SK-N-SH (cell line): ENCODE measurements at regions of chr7 and their contacts with region 1.

Region 1: DNA sequence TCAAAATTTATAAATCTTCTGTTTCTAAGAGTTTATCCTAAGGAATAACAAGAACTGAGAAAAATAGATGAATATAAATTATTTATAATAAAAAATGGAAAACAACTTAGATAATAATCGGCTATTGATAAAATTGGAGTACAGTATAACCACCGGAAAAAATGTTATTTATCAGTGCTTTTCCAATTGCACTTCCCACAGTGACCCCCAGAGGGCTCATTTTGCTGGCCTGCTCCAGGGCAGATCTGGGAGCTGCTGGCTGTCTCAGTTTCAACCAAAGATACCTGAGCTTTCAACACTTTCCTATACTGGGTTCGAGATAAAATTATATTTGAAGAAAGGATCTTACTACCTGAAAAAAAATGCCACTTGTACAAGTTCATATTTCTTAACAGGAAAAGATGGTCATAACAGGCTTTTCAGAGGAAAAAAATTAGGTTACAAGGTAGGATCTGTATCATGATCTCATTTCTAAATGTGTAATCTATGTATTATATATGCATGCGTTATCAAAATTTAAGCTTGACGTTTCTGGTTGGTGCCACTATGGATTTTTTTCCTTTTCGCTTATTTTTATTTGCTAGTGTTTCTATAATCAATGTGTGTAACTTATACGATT is 165.7 kb downstream of the NPSR1 start:
- DNase-seq: peak; percentile 66
- H3K4me3 ChIP-seq: no peak overlapping the region
- H3K27ac ChIP-seq: no peak overlapping the region
- H3K4me1 ChIP-seq: no peaks in the 10 kb centered on the region; a peak in 1 of 4 replicates
- H3K27me3 ChIP-seq: no peaks in the 10 kb centered on the region; the same call in 1 of the 2 replicates
- CTCF ChIP-seq: peak; percentile 98
- EP300 ChIP-seq: no peak
- RAD21 ChIP-seq: peak; percentile 79

Region 2: GRCh38 chr7:34806831-34807230 is 16.9 kb before region 1 on chr7:
- CTCF ChIA-PET with region 1: interaction called, 16 read pairs
- POLR2A ChIA-PET with region 1: no interaction called
- DNase-seq: no peak
- H3K4me3 ChIP-seq: no peak overlapping the region
- H3K27ac ChIP-seq: no peak overlapping the region
- H3K4me1 ChIP-seq: no peaks in the 10 kb centered on the region
- H3K27me3 ChIP-seq: peaks cover 14% of the 10 kb centered on the region; the same call in 1 of the 2 replicates
- CTCF ChIP-seq: no peak
- EP300 ChIP-seq: no peak
- RAD21 ChIP-seq: no peak

Region 3: GRCh38 chr7:34835901-34836600 is 12.3 kb after region 1 on chr7:
- CTCF ChIA-PET with region 1: interaction called, 13 read pairs
- POLR2A ChIA-PET with region 1: no interaction called
- DNase-seq: no peak
- H3K4me3 ChIP-seq: no peak overlapping the region
- H3K27ac ChIP-seq: no peak overlapping the region
- H3K4me1 ChIP-seq: peaks cover 0 to 5% of the 10 kb centered on the region in 2 experiments; a peak in 1 of 4 replicates
- H3K27me3 ChIP-seq: peaks cover 15% of the 10 kb centered on the region; the same call in 1 of the 2 replicates
- CTCF ChIP-seq: no peak
- EP300 ChIP-seq: no peak
- RAD21 ChIP-seq: no peak

Region 4: DNA sequence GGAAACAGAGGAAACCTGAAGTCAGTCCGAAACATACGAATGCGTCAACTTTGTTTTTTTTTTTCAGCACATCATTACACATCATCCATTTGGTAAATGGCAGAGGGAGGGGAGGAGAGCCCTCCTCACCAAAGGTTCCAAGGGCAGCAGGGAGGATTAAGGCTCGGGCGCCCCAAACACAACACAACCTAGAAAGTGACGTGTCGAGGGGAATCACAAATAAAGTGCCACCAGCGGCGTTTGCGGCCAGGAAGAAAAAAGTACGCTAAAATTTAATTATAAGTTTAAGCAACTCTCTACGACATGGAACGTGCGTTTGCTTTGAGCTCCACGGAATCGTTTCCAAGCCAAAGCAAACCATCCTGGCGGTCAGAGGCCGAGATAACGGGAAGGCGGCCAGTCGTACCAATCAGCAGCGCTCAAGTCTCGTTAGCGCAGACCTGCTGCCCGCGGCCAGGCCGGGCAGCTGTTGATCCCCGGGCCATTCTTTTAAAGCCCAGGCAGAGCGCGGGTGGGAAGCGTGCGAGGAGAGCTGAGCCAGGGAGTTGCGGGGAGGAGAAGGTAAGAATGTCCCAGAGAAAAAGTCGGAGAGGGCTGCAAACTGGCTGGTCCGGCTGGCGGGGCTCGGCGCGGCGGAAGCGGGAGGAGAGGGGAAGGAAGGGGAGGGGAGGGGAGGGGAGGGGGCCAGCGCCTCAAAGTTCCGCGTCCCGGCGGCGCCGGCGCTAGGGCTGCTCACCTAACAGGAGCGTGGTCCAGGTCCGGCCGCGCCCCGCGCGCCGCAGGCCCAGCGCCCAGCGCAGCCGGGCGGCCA is 212.8 kb after region 1 on chr7:
- CTCF ChIA-PET with region 1: interaction called, 16 read pairs
- POLR2A ChIA-PET with region 1: no interaction called
- DNase-seq: peak; percentile 80
- H3K4me3 ChIP-seq: peak overlapping the region; percentile 64 to 96
- H3K27ac ChIP-seq: peak overlapping the region; percentile 78 to 95
- H3K4me1 ChIP-seq: peaks cover 0 to 22% of the 10 kb centered on the region in 2 experiments; a peak in 3 of 4 replicates
- H3K27me3 ChIP-seq: no peaks in the 10 kb centered on the region
- CTCF ChIP-seq: no peak
- EP300 ChIP-seq: no peak
- RAD21 ChIP-seq: peak; percentile 21; the same call in 1 of the 2 replicates